Posterior cingulate gyrus (tissue), 11 donors: ENCODE measurements at regions of chr16 and their contacts with region 1.

Region 1: DNA sequence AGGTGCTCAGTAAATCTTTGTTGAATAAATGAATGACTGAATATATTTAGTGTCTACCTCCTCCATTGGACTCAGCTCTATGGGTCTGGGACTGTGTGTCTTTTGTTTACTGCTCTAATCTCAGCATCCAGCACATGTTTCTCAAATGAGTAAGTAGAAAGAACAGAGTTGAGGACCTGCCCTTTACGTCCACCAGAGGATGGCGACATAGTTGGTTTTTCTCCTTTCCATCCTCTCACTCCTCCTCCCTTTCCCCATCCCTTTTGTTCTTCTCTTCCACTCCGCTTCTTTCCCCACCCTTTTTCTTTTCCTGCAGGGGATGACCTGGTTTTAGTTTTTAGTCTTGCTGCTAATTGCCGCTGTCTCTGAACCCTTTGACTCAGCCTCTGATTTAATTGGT is 12.1 kb upstream of the CHP2 start:
- DNase-seq: no peak

Region 2: DNA sequence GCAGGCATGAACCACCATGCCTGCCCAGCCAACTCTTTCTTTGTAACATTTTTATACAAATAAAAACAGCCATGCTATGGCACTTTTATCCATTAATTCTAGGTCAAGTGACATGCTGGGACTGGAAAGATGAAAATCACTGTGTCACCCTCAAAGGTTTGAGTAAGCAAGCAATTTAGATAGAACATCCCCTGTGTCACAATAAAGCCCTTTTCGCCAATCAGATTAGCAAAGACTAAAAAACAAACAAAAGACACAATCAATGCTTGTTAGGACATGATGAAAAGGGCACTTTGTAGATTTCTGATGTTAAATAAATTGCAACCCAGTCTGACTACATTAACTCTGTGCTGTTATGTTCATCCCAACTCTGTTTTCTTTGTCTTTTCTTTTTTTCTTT is 38.4 kb after region 1 on chr16:
- intact Hi-C with region 1: no loop called
- DNase-seq: no peak

Region 3: GRCh38 chr16:23795378-23795777 is 52.6 kb after region 1 on chr16:
- intact Hi-C with region 1: loop called (anchors 10 kb)
- DNase-seq: no peak